Esophagus squamous epithelium (tissue), 5 donors: ENCODE measurements at regions of chr7 and their contacts with region 1.

Region 1: DNA sequence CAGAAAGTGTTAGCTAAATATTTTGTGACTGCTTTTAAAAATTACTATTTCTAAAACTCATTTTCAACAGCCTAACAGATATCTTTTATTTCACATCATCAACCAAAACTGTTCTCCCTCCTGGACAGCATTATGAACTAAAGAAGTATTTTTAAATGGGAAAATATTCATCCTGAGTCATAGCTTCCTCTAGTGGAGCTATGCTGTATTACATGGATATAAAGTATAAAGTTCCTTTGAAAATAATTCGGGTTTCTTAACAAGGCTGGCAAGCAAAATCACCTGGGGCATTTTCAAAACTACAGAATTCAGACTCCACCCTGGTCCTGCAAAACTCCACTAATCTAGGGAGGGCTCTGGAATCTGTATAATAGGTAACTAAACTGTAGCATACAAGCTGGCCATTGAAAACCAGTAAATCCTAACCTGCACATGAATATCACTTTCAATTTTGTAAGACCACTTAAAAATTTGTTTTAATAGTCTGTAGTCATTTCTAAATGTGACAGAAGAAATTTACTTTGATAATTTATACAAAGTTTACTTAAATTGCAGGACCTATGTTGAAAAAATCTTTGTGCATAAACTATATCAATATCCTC is 53.5 kb downstream of the SCIN start:
- DNase-seq: no peak
- H3K4me3 ChIP-seq: no peak overlapping the region
- H3K27ac ChIP-seq: no peak overlapping the region
- H3K4me1 ChIP-seq: peaks cover 0 to 4% (median 0%) of the 10 kb centered on the region in 3 donors
- H3K27me3 ChIP-seq: no peaks in the 10 kb centered on the region
- CTCF ChIP-seq: peak in 5 of 6 experiments; percentile 71 to 90 (median 81)
- POLR2A ChIP-seq: no peak

Region 2: GRCh38 chr7:12524794-12525386 is 99.1 kb before region 1 on chr7:
- intact Hi-C with region 1: loop called (anchors 10 kb)
- DNase-seq: no peak
- H3K4me3 ChIP-seq: no peak overlapping the region
- H3K27ac ChIP-seq: no peak overlapping the region
- H3K4me1 ChIP-seq: no peaks in the 10 kb centered on the region
- H3K27me3 ChIP-seq: no peaks in the 10 kb centered on the region
- CTCF ChIP-seq: peak in 5 of 6 experiments; percentile 58 to 74 (median 66)
- POLR2A ChIP-seq: no peak